Activated CD4-positive, alpha-beta memory T cell treated with anti-CD3 and anti-CD28 coated beads for 36 hours (primary cell): ENCODE measurements at regions of chr19 and their contacts with region 1.

Region 1: DNA sequence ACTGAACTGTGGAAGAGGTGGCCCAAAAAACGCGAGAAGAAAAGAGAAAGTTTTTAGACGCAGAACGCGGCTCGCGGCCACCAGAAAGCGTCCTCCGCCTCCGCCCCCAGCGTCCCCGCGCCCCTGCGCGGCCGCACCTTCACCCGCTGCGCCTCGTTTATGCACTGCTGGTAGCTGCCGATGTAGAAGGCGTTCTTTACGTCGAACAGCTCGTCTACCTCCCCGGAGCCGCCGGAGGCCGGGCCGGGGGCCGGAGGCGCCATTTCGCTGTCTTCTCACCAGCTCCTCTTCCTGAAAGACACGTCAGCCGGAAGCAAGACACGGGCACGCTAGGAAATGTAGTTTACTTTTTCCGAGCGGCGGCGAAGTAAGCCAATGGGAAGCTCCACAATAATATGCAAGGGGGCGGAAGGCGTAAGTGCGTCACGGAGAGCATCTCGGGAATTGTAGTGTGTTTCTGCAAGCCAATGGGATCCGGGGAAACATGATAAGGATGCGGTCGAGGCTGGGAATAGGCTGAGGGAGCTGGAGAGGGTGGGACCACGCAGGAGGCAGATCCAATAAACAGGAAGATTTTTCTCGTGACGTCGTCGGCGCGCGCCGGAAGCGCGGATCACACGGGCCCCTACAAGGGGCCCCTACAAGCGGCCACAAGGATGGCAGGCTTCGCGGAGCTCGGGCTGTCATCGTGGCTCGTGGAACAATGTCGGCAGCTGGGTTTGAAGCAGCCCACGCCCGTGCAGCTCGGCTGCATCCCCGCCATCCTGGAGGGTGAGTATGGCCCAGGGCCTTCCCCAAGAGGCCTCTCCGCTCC is at the starts of genes COPE and DDX49:
- DNase-seq: peak; percentile 99
- H3K4me3 Mint-ChIP-seq: peak within 1 kb of the TSS; percentile 89
- H3K27ac Mint-ChIP-seq: peak within 1 kb of the TSS; percentile 84
- H3K4me1 Mint-ChIP-seq: peaks cover 35% of the 10 kb centered on the region
- H3K27me3 Mint-ChIP-seq: no peaks in the 10 kb centered on the region
- total RNA-seq, gene COPE: 217 to 220 TPM
- total RNA-seq, gene DDX49: 37.7 to 46.3 TPM

Region 2: GRCh38 chr19:18636183-18636968 is 282.9 kb before region 1 on chr19:
- CTCF ChIA-PET with region 1: no interaction called
- POLR2A ChIA-PET with region 1: no interaction called
- intact Hi-C with region 1: loop called (anchors 1 kb)
- DNase-seq: peak; percentile 99
- H3K4me3 Mint-ChIP-seq: peak overlapping the region; percentile 82
- H3K27ac Mint-ChIP-seq: peak overlapping the region; percentile 74
- H3K4me1 Mint-ChIP-seq: peaks cover 22% of the 10 kb centered on the region
- H3K27me3 Mint-ChIP-seq: no peaks in the 10 kb centered on the region

Region 3: DNA sequence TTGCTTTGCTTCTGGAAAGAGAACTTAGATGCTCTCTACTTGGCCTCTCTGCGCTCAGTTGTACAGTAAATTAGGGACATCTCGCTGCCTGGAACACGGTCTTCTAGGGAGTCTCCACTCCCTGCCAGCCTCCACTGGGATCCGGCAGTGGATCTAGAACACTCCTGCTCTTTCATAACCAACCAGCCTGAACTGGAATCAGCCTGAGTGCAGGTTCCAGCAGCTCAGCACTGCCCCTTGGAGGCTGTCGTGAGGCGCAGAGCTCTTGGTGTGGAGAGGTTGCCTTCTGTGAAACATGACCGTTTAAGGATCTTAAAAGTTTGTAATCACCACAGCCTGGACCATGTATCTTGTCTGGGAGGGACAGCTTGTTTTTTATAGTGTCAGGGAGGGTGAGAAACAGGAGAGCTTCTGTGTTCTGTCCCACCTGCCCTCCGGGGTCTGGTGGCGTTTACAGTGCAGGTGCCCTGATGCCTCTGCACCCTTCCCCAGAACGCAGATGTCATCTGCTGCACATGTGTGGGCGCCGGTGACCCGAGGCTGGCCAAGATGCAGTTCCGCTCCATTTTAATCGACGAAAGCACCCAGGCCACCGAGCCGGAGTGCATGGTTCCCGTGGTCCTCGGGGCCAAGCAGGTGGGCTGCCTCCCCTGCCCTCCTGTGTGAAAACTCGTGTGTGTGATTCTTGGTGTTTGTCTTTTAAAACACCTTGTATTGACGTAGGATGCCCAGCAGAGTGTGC is 62.7 kb before region 1 on chr19:
- CTCF ChIA-PET with region 1: no interaction called
- POLR2A ChIA-PET with region 1: no interaction called
- intact Hi-C with region 1: no loop called
- DNase-seq: no peak
- H3K4me3 Mint-ChIP-seq: no peak overlapping the region
- H3K27ac Mint-ChIP-seq: no peak overlapping the region
- H3K4me1 Mint-ChIP-seq: no peaks in the 10 kb centered on the region
- H3K27me3 Mint-ChIP-seq: no peaks in the 10 kb centered on the region

Region 4: GRCh38 chr19:18932216-18932841 is 13.0 kb after region 1 on chr19:
- CTCF ChIA-PET with region 1: no interaction called
- POLR2A ChIA-PET with region 1: interaction called, 13 read pairs
- intact Hi-C with region 1: loop called (anchors 1 kb)
- DNase-seq: peak; percentile 90
- H3K4me3 Mint-ChIP-seq: peak overlapping the region; percentile 71
- H3K27ac Mint-ChIP-seq: no peak overlapping the region
- H3K4me1 Mint-ChIP-seq: peaks cover 6% of the 10 kb centered on the region
- H3K27me3 Mint-ChIP-seq: peaks cover 12% of the 10 kb centered on the region

Region 5: DNA sequence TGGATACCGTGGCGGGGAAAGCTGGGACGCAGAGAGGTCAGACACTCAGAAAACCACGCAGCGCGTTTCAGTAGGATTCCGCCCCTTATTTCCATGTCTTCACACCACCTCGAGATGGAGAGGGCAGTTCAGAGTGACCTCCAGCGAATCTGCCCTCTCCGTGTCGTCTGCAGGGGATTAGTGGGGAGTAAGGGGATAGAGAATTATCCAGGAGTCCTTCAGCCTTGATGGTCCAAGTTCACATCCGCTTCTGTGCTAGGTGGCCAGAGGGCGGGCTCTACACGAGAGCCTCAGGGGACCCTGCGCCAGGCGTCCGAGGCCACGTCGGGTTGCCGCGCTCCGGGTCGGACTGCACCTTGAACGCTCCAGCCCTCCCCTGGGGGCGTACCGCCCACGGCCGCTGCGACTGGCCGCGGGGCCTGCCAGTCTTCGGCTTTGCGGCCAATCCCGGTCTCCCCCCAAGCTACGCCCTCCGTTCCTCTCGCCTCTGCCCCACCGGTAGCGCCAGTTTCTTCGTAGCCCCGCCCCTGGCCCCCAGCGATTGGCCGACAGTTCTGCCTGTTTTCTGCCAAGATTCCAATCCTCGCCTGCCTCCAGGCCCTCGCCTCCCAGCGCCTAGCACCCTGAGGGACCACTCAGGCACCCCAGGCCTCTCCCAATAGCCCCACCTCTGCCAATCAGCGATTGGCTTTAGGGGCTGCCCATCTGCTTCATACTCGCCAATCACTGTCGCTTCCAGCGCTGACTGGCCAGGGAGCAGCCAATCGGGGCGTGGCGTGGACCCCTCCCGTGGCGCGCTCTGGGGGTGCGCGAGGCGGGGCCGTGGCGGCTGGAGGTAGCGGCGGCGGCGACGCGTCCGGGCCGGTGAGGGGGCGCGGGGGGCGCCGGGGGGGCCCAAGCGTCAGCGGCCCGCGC is 144.1 kb after region 1 on chr19 and contains the start of gene SLC25A42:
- CTCF ChIA-PET with region 1: interaction called, 4 read pairs
- POLR2A ChIA-PET with region 1: interaction called, 4 read pairs
- intact Hi-C with region 1: loop called (anchors 1 kb)
- DNase-seq: peak; percentile 99
- H3K4me3 Mint-ChIP-seq: peak within 1 kb of the TSS; percentile 79
- H3K27ac Mint-ChIP-seq: peak within 1 kb of the TSS; percentile 72
- H3K4me1 Mint-ChIP-seq: peaks cover 31% of the 10 kb centered on the region
- H3K27me3 Mint-ChIP-seq: no peaks in the 10 kb centered on the region
- total RNA-seq, gene SLC25A42: 12.2 to 12.4 TPM